ENCODE measurements at regions of chrX and their contacts with region 1.

Region 1: DNA sequence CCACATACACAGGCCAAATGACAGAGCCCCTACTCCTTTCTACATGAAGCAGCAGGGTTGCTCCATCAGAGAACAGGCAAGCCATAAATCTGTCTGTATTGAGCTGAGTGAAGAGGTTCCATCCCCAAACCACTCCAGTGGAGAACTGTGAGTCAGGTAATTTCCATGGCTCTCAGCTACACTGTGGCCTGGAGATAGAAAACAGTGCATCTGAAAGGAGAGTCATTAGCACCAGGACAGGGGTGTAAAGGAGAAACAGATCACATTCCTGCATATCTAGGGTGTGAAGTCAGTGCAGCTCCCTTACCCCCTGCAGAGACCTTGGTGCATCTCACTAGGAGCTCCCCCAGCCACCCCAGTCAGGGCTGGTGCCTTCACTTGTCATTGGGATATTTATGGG is 314.7 kb downstream of the CHIC1 start:
- DNase-seq: no peak
- H3K4me3 Mint-ChIP-seq: no peak overlapping the region
- H3K27ac Mint-ChIP-seq: peak overlapping the region; percentile 31
- H3K4me1 Mint-ChIP-seq: no peaks in the 10 kb centered on the region
- H3K27me3 Mint-ChIP-seq: no peaks in the 10 kb centered on the region
- CTCF ChIP-seq: no peak

Region 2: GRCh38 chrX:73728602-73729001 is 149.1 kb before region 1 on chrX:
- CTCF ChIA-PET with region 1: no interaction called
- POLR2A ChIA-PET with region 1: no interaction called
- intact Hi-C with region 1: no loop called
- DNase-seq: no peak
- H3K4me3 Mint-ChIP-seq: no peak overlapping the region
- H3K27ac Mint-ChIP-seq: no peak overlapping the region
- H3K4me1 Mint-ChIP-seq: no peaks in the 10 kb centered on the region
- H3K27me3 Mint-ChIP-seq: peaks cover 61% of the 10 kb centered on the region
- CTCF ChIP-seq: no peak

Region 3: GRCh38 chrX:73922856-73923455 is 45.3 kb after region 1 on chrX:
- CTCF ChIA-PET with region 1: no interaction called
- POLR2A ChIA-PET with region 1: interaction called, 3 read pairs
- intact Hi-C with region 1: loop called (anchors 10 kb)
- DNase-seq: peak; percentile 60
- H3K4me3 Mint-ChIP-seq: no peak overlapping the region
- H3K27ac Mint-ChIP-seq: peak overlapping the region; percentile 8
- H3K4me1 Mint-ChIP-seq: peaks cover 4% of the 10 kb centered on the region
- H3K27me3 Mint-ChIP-seq: no peaks in the 10 kb centered on the region
- CTCF ChIP-seq: no peak

Region 4: DNA sequence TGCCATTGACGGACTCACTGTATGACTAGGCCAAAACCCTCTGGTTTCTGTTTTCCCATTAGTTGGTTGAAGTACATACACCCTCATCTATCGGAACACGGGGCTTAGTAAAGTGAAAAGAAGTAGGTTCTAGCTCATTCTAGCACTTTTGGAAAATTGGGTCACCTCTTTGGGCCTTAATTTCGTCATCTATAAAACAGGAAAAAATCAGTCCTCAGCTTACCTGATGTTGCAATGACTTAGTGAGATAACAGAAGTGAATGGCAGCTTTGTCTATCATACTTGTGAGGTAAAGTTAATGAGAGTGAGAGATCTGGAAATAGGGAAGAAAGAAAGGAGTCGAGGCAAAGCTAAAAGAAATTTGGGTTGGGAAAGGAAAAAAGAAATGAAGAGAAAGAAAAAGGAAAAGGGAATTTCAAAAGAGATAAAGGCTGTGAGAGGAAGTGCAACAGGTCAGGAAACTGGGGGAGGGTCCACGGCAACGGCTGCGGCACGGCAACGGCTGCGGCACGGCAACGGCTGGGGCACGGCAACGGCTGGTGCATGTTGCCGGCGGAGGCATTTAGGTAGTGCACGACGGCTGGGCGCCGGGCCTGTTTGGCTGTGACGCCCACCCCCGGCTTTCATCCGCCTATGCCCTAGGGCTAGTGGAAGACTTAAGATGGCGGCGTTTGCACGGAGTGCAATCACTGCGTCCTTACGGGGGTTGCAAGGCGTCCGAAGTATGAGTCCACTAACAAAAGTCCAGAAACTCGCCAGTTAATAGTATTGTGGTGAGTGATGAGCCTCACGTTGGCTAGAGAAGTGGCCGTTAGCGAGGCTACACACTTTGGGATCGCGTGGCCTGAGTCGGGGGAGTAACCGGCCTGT is 66.2 kb after region 1 on chrX:
- CTCF ChIA-PET with region 1: no interaction called
- POLR2A ChIA-PET with region 1: interaction called, 16 read pairs
- intact Hi-C with region 1: no loop called
- DNase-seq: peak; percentile 91
- H3K4me3 Mint-ChIP-seq: peak overlapping the region; percentile 76
- H3K27ac Mint-ChIP-seq: peak overlapping the region; percentile 82
- H3K4me1 Mint-ChIP-seq: peaks cover 15% of the 10 kb centered on the region
- H3K27me3 Mint-ChIP-seq: peaks cover 11% of the 10 kb centered on the region
- CTCF ChIP-seq: no peak